Dendritic cell treated with granulocyte-macrophage colony-stimulating factor and Interleukin-4, amounts not matched to agents 40 ng/mL and 50 ng/mL, for 4 days (primary cell): ENCODE measurements at regions of chr18 and their contacts with region 1.

Region 1: DNA sequence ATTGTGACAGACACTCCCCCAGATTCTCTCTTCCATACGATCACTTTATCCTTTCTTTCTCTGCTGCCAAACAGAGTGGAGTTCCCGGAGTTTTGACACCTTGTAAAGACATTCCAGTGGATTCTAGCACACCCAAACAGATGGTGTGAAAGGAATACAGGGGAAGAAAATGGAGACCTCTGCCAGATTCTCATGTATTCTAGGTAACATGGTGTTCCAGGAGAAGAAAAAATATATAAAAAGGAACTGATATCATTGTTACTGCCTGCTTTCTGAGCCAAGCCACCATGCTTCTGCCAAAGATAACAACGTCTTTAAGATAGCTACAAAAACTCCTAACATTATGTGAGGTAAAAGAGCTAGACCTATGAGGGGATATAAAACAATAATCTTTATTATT is 136.5 kb downstream of the TXNL1 start:
- H3K4me3 Mint-ChIP-seq: no peak overlapping the region
- H3K27ac Mint-ChIP-seq: no peak overlapping the region
- H3K4me1 Mint-ChIP-seq: peaks cover 8% of the 10 kb centered on the region
- H3K27me3 Mint-ChIP-seq: no peaks in the 10 kb centered on the region

Region 2: GRCh38 chr18:56458770-56459712 is 42.9 kb before region 1 on chr18:
- intact Hi-C with region 1: loop called (anchors 5 kb)
- H3K4me3 Mint-ChIP-seq: no peak overlapping the region
- H3K27ac Mint-ChIP-seq: no peak overlapping the region
- H3K4me1 Mint-ChIP-seq: peaks cover 32% of the 10 kb centered on the region
- H3K27me3 Mint-ChIP-seq: no peaks in the 10 kb centered on the region